ENCODE measurements at regions of chr12 and their contacts with region 1.

Region 1: DNA sequence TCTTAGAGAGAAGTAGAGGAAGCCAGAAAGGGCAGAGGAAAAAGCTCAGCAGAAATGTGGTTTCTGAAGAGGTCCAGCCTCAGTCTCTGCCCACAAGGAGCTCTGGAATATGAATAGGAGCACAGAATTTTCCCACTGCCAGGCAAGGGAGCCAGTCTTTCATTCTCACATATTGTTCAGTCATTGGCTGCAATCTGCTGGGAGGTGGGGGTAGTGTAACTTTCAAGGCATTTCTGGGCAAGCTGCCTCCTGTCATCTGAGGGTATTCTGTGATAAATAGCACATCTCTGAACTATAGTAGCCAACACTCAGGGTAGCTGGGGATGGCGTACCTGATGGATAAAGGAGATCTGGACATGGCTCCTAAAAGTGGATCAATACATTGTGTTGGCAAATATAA is 127.2 kb downstream of the LRRK2 start:
- DNase-seq: no peak
- CTCF ChIP-seq: no peak

Region 2: GRCh38 chr12:40473962-40474361 is 122.0 kb after region 1 on chr12:
- in situ Hi-C with region 1: loop called (anchors 25 kb)
- DNase-seq: no peak
- CTCF ChIP-seq: no peak